ENCODE measurements at regions of chr2 and their contacts with region 1.

Region 1: GRCh38 chr2:226791487-226792081 is 8.0 kb downstream of the IRS1 start:
- DNase-seq: peak; percentile 89 to 93
- ATAC-seq: peak; percentile 71 to 74
- H3K4me3 ChIP-seq: peak overlapping the region; percentile 71 to 89 (median 80)
- H3K27ac ChIP-seq: peak overlapping the region; percentile 95 to 99 (median 98)
- H3K4me1 ChIP-seq: peaks cover 63 to 74% of the 10 kb centered on the region in 2 donors
- H3K27me3 ChIP-seq: no peaks in the 10 kb centered on the region
- CTCF ChIP-seq: peak; percentile 45 to 80 (median 72)
- POLR2A ChIP-seq: peak; percentile 79 to 95

Region 2: GRCh38 chr2:226649871-226650660 is 141.5 kb before region 1 on chr2:
- in situ Hi-C with region 1: loop called in 1 of 4 experiments (anchors 25 kb)
- intact Hi-C with region 1: no loop called
- DNase-seq: peak; percentile 70 to 89
- ATAC-seq: peak; percentile 96 to 97
- H3K4me3 ChIP-seq: peak overlapping the region in 2 of 4 donors; percentile 14 to 18
- H3K27ac ChIP-seq: peak overlapping the region; percentile 74 to 85 (median 79)
- H3K4me1 ChIP-seq: peaks cover 16 to 23% of the 10 kb centered on the region in 2 donors
- H3K27me3 ChIP-seq: no peaks in the 10 kb centered on the region
- CTCF ChIP-seq: no peak
- POLR2A ChIP-seq: no peak

Region 3: DNA sequence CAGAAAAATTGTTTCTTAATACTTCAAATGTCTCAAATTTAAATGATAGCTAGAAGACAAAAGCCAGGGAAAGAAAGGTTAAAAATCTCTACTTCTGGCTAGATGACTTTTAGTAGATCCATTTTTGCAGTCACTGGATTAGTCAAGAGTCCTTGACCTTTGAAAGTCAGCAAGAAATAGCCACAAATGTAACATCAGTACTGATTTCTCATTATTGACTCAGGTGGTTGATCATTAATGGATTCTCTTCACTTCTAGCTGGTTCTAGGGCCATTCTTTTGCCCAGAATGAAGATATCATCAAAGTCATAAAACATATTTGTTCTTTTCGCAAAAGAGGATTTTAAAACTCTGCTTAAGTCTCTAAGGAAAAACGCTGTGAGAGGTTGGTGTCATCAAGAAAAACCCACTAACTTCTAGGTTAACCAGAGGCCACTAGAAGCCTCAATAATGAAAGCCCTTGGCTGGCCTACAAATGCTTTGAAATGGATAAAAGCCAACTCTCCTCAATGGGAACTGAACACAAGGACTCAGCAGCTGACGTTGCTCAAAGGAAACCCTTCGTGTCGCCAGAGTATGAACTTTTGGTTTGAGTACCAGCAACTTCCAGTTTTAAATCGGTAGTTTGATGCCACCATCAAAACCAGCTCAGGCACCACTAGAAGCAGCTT is 58.3 kb before region 1 on chr2:
- in situ Hi-C with region 1: no loop called
- intact Hi-C with region 1: loop called (anchors 10 kb)
- DNase-seq: no peak
- ATAC-seq: no peak
- H3K4me3 ChIP-seq: no peak overlapping the region
- H3K27ac ChIP-seq: peak overlapping the region; percentile 31 to 65 (median 62)
- H3K4me1 ChIP-seq: peaks cover 13 to 28% of the 10 kb centered on the region in 2 donors
- H3K27me3 ChIP-seq: no peaks in the 10 kb centered on the region
- CTCF ChIP-seq: no peak
- POLR2A ChIP-seq: no peak

Region 4: GRCh38 chr2:226758921-226759640 is 32.5 kb before region 1 on chr2:
- in situ Hi-C with region 1: no loop called
- intact Hi-C with region 1: loop called (anchors 5 kb)
- DNase-seq: no peak
- ATAC-seq: peak in 1 of 2 donors; percentile 28
- H3K4me3 ChIP-seq: peak overlapping the region in 2 of 4 donors; percentile 15 to 21
- H3K27ac ChIP-seq: peak overlapping the region; percentile 83 to 94 (median 92)
- H3K4me1 ChIP-seq: peaks cover 75 to 85% of the 10 kb centered on the region in 2 donors
- H3K27me3 ChIP-seq: no peaks in the 10 kb centered on the region
- CTCF ChIP-seq: no peak
- POLR2A ChIP-seq: no peak

Region 5: DNA sequence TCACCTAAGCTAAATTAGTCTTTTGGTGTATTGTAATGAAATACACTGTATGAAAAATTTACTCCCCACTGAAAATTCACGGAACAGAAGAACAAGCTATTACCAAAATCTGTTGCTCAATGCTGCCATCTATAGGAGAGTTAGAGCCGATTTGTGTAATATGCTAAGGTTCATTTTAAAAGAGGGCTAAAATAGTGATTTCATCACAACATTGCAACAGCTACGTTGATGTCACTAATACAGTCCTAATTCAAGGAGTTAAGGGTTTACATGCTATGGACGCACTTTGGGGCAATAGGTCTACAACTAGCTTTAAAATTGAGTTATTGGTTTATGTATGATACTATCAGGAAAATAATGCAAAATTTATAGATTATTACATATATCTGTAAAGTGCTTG is 11.0 kb after region 1 on chr2:
- in situ Hi-C with region 1: no loop called
- intact Hi-C with region 1: no loop called
- DNase-seq: no peak
- ATAC-seq: peak; percentile 9 to 20
- H3K4me3 ChIP-seq: no peak overlapping the region
- H3K27ac ChIP-seq: peak overlapping the region; percentile 95 to 99 (median 98)
- H3K4me1 ChIP-seq: peaks cover 14 to 21% of the 10 kb centered on the region in 2 donors
- H3K27me3 ChIP-seq: no peaks in the 10 kb centered on the region
- CTCF ChIP-seq: peak; percentile 51 to 80 (median 75)
- POLR2A ChIP-seq: no peak